ENCODE measurements at regions of chr1 and their contacts with region 1.

Region 1: DNA sequence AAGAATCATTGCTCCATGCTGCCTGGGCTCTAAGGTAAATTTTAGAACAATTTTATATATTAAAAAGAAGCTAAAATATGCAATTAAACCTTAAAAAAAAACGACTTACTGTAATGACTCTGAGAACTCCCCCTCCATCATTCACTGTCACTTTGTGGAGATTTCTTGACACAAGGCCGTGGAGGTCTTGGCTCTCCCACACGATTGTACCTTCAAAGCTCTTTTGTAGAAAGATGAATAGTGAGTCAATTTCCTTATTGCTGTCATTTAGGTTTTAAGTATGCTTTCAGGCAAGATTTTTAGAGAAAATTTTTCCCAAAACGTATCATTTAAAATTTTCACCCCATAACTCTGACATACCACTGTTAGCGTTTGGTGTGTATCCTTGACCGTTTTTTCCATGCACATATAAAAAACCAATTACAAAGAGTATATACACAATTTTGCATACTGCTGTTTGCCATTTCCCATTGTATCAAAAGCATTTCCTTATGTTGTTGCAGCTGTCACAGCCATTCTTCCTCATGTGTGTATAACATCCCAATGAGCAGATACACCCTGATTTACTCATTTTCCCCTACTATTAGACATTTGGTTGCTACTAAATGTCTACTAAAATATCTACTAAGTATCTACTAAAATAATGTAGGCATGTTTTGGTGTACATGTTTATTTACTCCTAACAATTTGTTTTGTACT is 33.4 kb downstream of the B3GALNT2 start:
- DNase-seq: no peak
- ATAC-seq: no peak
- H3K4me3 ChIP-seq: no peak overlapping the region
- H3K4me3 Mint-ChIP-seq: no peak overlapping the region
- H3K27ac ChIP-seq: no peak overlapping the region
- H3K27ac Mint-ChIP-seq: no peak overlapping the region
- H3K4me1 ChIP-seq: no peaks in the 10 kb centered on the region
- H3K4me1 Mint-ChIP-seq: no peaks in the 10 kb centered on the region
- H3K27me3 ChIP-seq: no peaks in the 10 kb centered on the region
- H3K27me3 Mint-ChIP-seq: no peaks in the 10 kb centered on the region

Region 2: DNA sequence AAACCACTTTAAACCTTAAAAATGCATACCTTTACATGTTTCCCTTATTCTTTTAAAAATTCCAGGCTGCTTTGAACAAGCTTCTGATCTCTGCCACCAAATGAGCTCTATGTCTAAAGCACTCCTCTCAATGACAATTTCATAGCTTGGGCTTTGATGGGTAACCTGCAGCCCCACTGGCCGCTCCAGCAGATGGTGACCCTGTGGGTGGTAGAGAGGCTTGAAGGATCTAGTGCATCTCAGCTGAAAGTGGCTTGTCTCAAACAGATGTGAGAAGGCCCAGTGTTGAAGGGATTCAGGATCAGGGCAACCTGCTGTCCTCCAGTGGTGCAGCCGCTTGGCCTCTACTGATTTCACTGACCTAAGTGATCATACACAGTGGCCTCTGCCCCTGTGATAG is 776.2 kb before region 1 on chr1:
- CTCF ChIA-PET with region 1: no interaction called
- POLR2A ChIA-PET with region 1: interaction called in 1 of 2 experiments, 15 read pairs
- DNase-seq: no peak
- ATAC-seq: no peak
- H3K4me3 ChIP-seq: no peak overlapping the region
- H3K4me3 Mint-ChIP-seq: no peak overlapping the region
- H3K27ac ChIP-seq: no peak overlapping the region
- H3K27ac Mint-ChIP-seq: no peak overlapping the region
- H3K4me1 ChIP-seq: no peaks in the 10 kb centered on the region
- H3K4me1 Mint-ChIP-seq: peaks cover 0 to 5% (median 0%) of the 10 kb centered on the region in 3 donors
- H3K27me3 ChIP-seq: no peaks in the 10 kb centered on the region
- H3K27me3 Mint-ChIP-seq: no peaks in the 10 kb centered on the region